GM13977 (cell line): ENCODE measurements at regions of chr12 and their contacts with region 1.

Region 1: DNA sequence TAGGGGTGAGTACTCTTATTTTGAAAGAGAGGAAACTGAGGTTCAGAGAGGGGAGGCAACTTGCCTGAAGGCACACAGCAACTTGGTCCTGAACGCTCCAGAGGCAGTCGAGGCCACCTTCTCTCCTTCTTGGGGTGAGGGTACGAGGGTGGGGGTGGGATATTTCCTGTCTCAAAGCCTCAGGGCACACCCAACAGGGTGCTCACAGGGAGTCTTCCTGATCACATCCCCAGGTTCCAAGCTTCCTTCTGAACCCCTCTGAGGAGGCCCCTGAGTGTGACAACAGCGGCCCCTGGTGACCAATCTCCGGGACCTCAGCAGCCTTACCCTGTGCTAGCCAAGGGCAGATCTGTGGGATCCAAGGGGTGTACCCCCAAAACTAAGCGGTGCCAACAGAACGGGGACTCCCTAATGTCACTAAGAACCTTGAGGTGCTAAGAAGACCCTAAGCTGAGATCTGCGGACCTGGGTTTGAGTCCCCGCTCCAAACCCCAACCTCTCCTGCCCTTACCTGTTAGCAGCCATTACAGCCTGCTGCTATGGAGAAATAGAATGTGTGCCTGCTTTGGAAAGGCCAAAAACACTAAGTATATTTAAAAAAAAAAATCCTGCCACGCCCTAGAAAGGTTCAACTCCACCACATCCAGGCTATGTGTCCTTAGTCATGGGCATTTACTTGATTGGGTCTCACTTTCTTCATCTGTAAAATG is 57.9 kb downstream of the TRPV4 start:
- DNase-seq: peak; percentile 82
- CTCF ChIP-seq: peak; percentile 90

Region 2: GRCh38 chr12:109432841-109433304 is 342.5 kb before region 1 on chr12:
- in situ Hi-C with region 1: loop called (anchors 10 kb)
- DNase-seq: peak; percentile 71
- CTCF ChIP-seq: peak; percentile 94

Region 3: GRCh38 chr12:109518820-109519665 is 256.3 kb before region 1 on chr12:
- in situ Hi-C with region 1: loop called (anchors 10 kb)
- DNase-seq: peak; percentile 72
- CTCF ChIP-seq: peak; percentile 64

Region 4: GRCh38 chr12:110073049-110073831 is 297.9 kb after region 1 on chr12:
- in situ Hi-C with region 1: no loop called
- DNase-seq: no peak
- CTCF ChIP-seq: no peak